Transverse colon (tissue), 4 donors: ENCODE measurements at regions of chr16 and their contacts with region 1.

Region 1: DNA sequence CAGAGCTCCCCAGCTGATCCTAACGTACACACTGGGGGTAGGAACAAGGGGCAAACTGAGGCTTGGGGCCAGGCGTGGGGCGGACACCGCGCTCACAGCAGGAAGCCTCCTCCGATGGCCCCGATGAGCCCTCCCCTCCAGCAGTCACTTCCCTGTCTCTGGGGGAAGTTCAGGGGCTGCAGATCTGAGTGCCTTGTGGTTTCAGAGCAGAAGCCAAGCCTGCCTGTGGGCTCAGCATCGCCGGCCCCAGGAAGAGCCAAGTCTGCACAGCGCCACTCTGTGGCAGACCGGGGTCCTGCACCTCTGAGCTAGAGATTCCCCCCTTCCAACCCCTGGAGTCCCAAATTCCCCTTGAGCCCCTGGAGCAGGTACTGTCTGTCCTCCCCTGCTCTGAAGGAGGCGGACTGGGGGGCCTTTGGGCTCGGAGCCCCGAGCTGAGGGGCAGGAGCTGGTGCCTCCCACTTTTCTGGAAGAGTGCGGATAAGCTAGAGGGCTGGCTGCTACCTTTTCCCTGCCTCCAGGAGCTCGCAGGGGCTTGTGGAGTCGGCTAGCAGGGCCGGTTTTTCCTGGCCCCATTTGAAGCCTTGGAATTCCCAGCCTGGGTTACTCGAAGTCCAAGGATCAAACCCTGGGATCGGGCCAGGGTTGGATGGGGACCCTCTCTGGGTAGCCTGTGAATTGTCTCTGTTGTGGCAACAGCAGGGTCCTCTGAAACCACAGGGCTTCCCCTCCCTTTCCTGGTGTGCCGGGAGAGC is 2.9 kb downstream of the GSE1 start:
- DNase-seq: peak; percentile 83
- H3K4me3 ChIP-seq: peak overlapping the region in 1 of 4 donors; percentile 62
- H3K27ac ChIP-seq: peak overlapping the region; percentile 89 to 98 (median 94)
- H3K4me1 ChIP-seq: peaks cover 30 to 64% (median 54%) of the 10 kb centered on the region in 4 donors
- H3K27me3 ChIP-seq: no peaks in the 10 kb centered on the region
- CTCF ChIP-seq: peak; percentile 77 to 92 (median 85)
- EP300 ChIP-seq: no peak
- POLR2A ChIP-seq: no peak

Region 2: GRCh38 chr16:84647828-84648594 is 968.0 kb before region 1 on chr16 and contains the start of gene KLHL36:
- in situ Hi-C with region 1: no loop called
- intact Hi-C with region 1: no loop called
- DNase-seq: peak; percentile 63
- H3K4me3 ChIP-seq: peak within 1 kb of the TSS; percentile 62 to 83 (median 75)
- H3K27ac ChIP-seq: peak within 1 kb of the TSS; percentile 77 to 88 (median 85)
- H3K4me1 ChIP-seq: peaks cover 4 to 26% (median 17%) of the 10 kb centered on the region in 4 donors
- H3K27me3 ChIP-seq: no peaks in the 10 kb centered on the region
- CTCF ChIP-seq: peak in 1 of 5 experiments; percentile 29
- EP300 ChIP-seq: no peak
- POLR2A ChIP-seq: no peak
- total RNA-seq, gene KLHL36: 38.0 to 75.5 (median 66.7) TPM

Region 3: GRCh38 chr16:85126705-85127419 is 489.2 kb before region 1 on chr16:
- in situ Hi-C with region 1: no loop called
- intact Hi-C with region 1: loop called (anchors 5 kb)
- DNase-seq: no peak
- H3K4me3 ChIP-seq: no peak overlapping the region
- H3K27ac ChIP-seq: peak overlapping the region in 2 of 4 donors; percentile 28 to 48
- H3K4me1 ChIP-seq: peaks cover 10 to 31% (median 16%) of the 10 kb centered on the region in 4 donors
- H3K27me3 ChIP-seq: no peaks in the 10 kb centered on the region
- CTCF ChIP-seq: no peak
- EP300 ChIP-seq: no peak
- POLR2A ChIP-seq: no peak